ENCODE measurements at regions of chr11 and their contacts with region 1.

Region 1: DNA sequence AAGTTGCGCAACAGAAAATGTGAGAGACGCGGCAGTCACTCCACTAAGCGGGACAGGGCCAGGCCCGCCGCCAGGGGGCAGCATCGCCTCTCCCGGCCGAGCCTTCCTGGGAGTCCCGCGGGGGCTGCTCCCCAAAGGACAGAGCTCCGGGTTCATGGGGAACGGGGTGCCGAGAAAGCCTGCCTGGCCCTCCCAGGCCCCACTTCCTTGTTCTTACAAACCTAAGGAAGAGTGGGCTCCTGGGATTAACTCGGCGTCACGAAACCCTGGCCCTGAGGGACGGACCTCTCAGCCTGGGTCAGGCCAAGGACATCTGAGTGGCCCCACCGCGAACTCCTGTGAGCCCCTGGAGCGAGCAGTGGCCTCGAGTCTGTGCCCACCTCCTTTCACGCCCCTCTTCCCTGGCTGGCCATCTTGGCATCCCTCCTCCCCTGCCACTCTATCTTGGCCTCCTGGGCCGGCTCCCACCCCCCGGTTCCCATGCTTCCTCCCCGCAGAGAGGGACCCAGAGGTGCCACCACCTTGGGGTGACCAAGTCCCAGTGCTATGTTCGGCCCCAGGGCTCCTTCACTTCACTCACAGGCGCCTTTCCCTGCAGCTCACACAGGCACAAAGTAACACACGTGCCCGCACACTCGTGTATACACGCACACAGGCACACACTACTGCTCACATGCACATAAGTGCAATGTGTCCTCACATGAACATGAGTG is 99.9 kb upstream of the FGF3 start:
- DNase-seq: peak; percentile 82
- ATAC-seq: peak; percentile 66 to 78
- H3K4me3 ChIP-seq: no peak overlapping the region
- H3K27ac ChIP-seq: no peak overlapping the region
- H3K4me1 ChIP-seq: peaks cover 27% of the 10 kb centered on the region
- H3K27me3 ChIP-seq: peaks cover 15% of the 10 kb centered on the region
- CTCF ChIP-seq: peak; percentile 90

Region 2: DNA sequence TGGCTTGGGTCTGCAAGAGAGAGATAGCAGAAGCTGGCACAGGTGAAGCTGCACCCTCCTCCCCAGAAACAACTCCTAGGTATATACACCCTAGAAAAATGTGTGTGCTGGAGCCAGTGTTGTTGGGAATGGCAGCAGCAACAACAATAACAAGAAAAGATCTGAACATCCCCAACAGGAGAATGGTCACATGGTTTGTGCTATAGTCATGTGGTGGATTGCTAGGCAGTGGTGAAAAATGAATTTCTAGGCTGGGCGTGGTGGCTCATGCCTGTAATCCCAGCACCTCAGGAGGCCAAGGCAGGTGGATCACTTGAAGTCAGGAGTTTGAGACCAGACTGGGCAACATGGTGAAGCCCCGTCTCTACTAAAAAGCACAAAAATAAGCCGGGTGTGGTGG is 184.3 kb before region 1 on chr11:
- intact Hi-C with region 1: no loop called
- DNase-seq: no peak
- ATAC-seq: no peak
- H3K4me3 ChIP-seq: no peak overlapping the region
- H3K27ac ChIP-seq: no peak overlapping the region
- H3K4me1 ChIP-seq: no peaks in the 10 kb centered on the region
- H3K27me3 ChIP-seq: peaks cover 18% of the 10 kb centered on the region
- CTCF ChIP-seq: no peak

Region 3: DNA sequence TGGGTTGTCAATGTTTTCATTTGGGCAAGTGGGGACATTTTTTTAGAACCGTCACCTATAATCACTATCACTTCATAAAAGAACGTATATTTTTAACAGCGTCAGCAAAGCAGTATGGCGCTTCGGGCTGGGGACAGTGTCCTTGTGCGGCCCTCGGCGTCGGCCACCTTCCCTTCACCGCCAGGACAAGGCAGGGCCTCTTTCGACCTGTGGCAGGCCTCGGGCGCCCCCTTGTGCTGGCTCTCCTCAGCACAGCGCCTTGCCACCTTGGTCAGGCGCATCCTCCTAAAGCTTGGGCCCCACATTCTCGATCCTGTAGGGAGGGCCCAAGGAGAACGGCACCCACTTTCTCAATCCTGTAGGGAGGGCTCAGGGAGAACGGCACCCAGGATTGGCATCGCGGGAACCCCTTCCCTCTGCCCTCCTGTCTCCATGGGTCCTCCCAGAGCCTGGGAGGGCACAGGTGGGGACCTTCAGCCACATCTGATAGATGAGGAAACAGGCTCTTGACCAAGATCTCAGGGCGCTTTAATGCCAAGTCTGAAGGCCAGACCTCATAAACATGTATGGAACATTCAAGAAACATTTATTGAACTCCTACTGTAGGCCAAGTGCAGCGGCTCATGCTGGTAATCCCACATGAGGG is 272.5 kb after region 1 on chr11:
- intact Hi-C with region 1: loop called (anchors 5 kb)
- DNase-seq: peak; percentile 85
- ATAC-seq: peak; percentile 88 to 89
- H3K4me3 ChIP-seq: no peak overlapping the region
- H3K27ac ChIP-seq: no peak overlapping the region
- H3K4me1 ChIP-seq: peaks cover 6% of the 10 kb centered on the region
- H3K27me3 ChIP-seq: peaks cover 8% of the 10 kb centered on the region
- CTCF ChIP-seq: peak; percentile 88

Measured in lower lobe of right lung (tissue), 2 donors.